CD8-positive, alpha-beta memory T cell (primary cell): ENCODE measurements at regions of chr2 and their contacts with region 1.

Region 1: GRCh38 chr2:100610381-100610831 is 47.6 kb downstream of the PDCL3 start:
- DNase-seq: peak; percentile 51 to 81 (median 59)
- H3K4me3 ChIP-seq: no peak overlapping the region
- H3K4me3 Mint-ChIP-seq: no peak overlapping the region
- H3K27ac ChIP-seq: no peak overlapping the region
- H3K27ac Mint-ChIP-seq: peak overlapping the region in 1 of 8 donors; percentile 27
- H3K4me1 ChIP-seq: peaks cover 4% of the 10 kb centered on the region
- H3K4me1 Mint-ChIP-seq: peaks cover 0 to 2% (median 0%) of the 10 kb centered on the region in 3 donors
- H3K27me3 ChIP-seq: no peaks in the 10 kb centered on the region
- H3K27me3 Mint-ChIP-seq: peaks cover 2 to 5% of the 10 kb centered on the region in 2 donors

Region 2: DNA sequence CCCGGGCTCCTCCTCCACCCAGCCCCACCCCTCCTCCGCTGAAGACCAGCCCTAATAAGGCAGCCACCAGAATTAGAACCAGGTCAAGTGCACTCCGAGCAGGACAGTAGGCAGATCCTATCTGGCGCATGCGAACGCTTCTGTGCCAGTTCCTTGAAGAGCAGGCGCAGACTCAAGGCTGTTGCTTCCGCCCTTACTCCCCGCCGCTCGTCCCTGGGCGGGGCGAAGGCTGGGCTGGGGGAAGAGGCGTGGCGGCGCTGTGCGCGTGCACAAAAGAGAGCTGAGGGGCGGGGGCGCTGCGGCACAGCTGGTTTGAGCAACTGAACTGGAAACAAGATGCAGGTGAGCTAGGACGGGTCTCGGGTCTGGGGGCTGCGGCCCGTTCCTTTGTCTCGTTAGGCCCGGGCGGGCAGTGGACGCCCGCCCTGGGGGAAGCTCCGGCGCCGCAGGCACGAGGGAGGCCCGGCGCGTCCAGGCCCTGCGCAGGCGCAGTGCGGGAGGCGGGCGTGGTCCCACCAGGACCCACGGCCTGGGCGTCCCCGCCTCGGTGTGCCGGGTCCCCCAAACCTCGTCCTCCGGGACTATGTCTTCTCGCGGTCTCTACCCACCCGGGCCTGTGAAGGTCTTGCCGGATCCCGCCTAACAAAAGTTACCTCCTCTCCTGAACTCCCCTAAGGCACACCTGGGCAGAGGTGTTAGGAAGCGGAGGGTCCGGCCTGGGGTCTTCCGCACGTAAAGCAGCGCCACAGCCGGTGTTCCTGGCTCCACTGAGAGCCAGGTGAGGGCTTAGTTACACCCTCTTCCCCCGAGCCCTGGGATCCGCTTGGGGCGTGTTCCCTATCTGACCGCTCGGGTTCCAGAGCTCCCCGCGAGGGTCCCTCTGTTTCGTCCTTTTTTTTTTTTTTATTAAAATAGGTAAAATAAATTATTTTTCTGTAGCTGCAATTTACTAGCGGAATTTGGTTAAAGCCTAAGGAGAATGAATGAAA is 47.4 kb before region 1 on chr2 and contains the start of gene PDCL3:
- CTCF ChIA-PET with region 1: interaction called, 12 read pairs
- POLR2A ChIA-PET with region 1: interaction called, 3 read pairs
- DNase-seq: peak; percentile 91 to 98 (median 97)
- H3K4me3 ChIP-seq: peak within 1 kb of the TSS; percentile 93
- H3K4me3 Mint-ChIP-seq: peak within 1 kb of the TSS; percentile 89 to 97 (median 94)
- H3K27ac ChIP-seq: peak within 1 kb of the TSS; percentile 85
- H3K27ac Mint-ChIP-seq: peak within 1 kb of the TSS; percentile 96 to 99 (median 98)
- H3K4me1 ChIP-seq: peaks cover 22% of the 10 kb centered on the region
- H3K4me1 Mint-ChIP-seq: peaks cover 26 to 57% (median 49%) of the 10 kb centered on the region in 3 donors
- H3K27me3 ChIP-seq: no peaks in the 10 kb centered on the region
- H3K27me3 Mint-ChIP-seq: no peaks in the 10 kb centered on the region
- total RNA-seq, gene PDCL3: 46.5 to 54.1 TPM

Region 3: GRCh38 chr2:100580367-100581276 is 29.8 kb before region 1 on chr2:
- CTCF ChIA-PET with region 1: interaction called, 10 read pairs
- POLR2A ChIA-PET with region 1: no interaction called
- DNase-seq: peak; percentile 35 to 85 (median 72)
- H3K4me3 ChIP-seq: peak overlapping the region; percentile 49
- H3K4me3 Mint-ChIP-seq: peak overlapping the region; percentile 8 to 79 (median 64)
- H3K27ac ChIP-seq: peak overlapping the region; percentile 73
- H3K27ac Mint-ChIP-seq: peak overlapping the region; percentile 88 to 100 (median 96)
- H3K4me1 ChIP-seq: peaks cover 34% of the 10 kb centered on the region
- H3K4me1 Mint-ChIP-seq: peaks cover 32 to 52% (median 36%) of the 10 kb centered on the region in 3 donors
- H3K27me3 ChIP-seq: no peaks in the 10 kb centered on the region
- H3K27me3 Mint-ChIP-seq: no peaks in the 10 kb centered on the region

Region 4: DNA sequence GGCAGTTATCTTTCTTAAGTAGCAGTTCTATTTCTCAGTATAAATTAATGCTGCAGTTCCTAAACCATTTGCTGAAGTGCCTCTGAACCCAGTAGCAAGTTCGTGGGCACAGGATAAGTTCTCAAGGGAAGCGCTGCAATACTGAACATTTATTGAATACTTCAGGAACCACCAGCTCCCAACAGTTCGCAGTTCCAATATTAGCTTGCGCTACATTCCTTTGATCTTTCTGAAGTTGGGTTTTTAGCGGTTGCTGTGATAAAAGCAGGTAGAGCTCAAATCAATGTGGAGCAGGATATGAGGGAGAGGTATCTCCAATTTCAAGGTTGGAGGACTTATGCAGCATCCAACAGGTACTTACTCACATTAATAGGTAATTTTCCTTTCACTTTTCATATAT is 13.9 kb before region 1 on chr2:
- CTCF ChIA-PET with region 1: interaction called, 35 read pairs
- POLR2A ChIA-PET with region 1: no interaction called
- DNase-seq: no peak
- H3K4me3 ChIP-seq: no peak overlapping the region
- H3K4me3 Mint-ChIP-seq: no peak overlapping the region
- H3K27ac ChIP-seq: no peak overlapping the region
- H3K27ac Mint-ChIP-seq: no peak overlapping the region
- H3K4me1 ChIP-seq: no peaks in the 10 kb centered on the region
- H3K4me1 Mint-ChIP-seq: peaks cover 15 to 29% (median 21%) of the 10 kb centered on the region in 3 donors
- H3K27me3 ChIP-seq: no peaks in the 10 kb centered on the region
- H3K27me3 Mint-ChIP-seq: no peaks in the 10 kb centered on the region

Region 5: DNA sequence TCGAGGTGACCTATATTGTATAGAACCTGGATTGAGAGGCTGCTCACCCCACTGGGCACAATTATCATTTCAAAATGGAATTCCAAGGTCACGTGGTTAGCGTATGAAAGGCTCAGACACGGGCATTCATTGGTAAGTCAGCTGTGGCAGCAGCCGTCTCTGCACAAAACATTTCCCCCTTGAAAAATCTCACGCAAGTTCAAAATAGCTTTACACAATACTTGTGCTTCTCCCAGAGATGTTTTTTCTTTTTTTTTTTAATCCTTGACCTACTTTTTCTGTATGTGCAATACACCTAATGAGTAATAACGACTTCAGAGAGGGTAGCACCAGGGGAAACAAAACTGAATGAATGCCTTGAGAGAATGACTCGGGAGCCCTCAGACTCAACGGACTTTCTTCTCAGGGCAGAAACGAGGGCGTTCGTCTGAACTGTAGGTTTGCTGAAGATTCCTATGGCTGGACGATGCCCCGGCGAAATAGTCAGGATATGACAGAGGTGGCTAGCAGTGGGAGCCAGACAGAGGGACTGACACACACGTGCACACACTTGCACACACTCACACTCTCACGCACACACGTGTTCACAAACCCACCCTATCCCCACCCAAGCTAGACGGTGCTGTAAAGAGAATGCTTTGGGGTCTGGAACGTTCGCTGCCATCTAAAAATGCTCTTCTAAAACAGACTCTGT is 30.2 kb after region 1 on chr2:
- CTCF ChIA-PET with region 1: interaction called, 24 read pairs
- POLR2A ChIA-PET with region 1: no interaction called
- DNase-seq: no peak
- H3K4me3 ChIP-seq: no peak overlapping the region
- H3K4me3 Mint-ChIP-seq: peak overlapping the region in 5 of 7 donors; percentile 6 to 60 (median 38)
- H3K27ac ChIP-seq: no peak overlapping the region
- H3K27ac Mint-ChIP-seq: peak overlapping the region in 4 of 8 donors; percentile 13 to 90 (median 52)
- H3K4me1 ChIP-seq: peaks cover 34% of the 10 kb centered on the region
- H3K4me1 Mint-ChIP-seq: peaks cover 38 to 53% (median 53%) of the 10 kb centered on the region in 3 donors
- H3K27me3 ChIP-seq: no peaks in the 10 kb centered on the region
- H3K27me3 Mint-ChIP-seq: peaks cover 0 to 10% of the 10 kb centered on the region in 2 donors

Region 6: GRCh38 chr2:100984892-100985379 is 374.5 kb after region 1 on chr2:
- CTCF ChIA-PET with region 1: interaction called, 106 read pairs
- POLR2A ChIA-PET with region 1: no interaction called
- DNase-seq: peak; percentile 57 to 84 (median 67)
- H3K4me3 ChIP-seq: no peak overlapping the region
- H3K4me3 Mint-ChIP-seq: peak overlapping the region in 1 of 7 donors; percentile 34
- H3K27ac ChIP-seq: no peak overlapping the region
- H3K27ac Mint-ChIP-seq: peak overlapping the region in 2 of 8 donors; percentile 5 to 35
- H3K4me1 ChIP-seq: no peaks in the 10 kb centered on the region
- H3K4me1 Mint-ChIP-seq: peaks cover 0 to 3% (median 2%) of the 10 kb centered on the region in 3 donors
- H3K27me3 ChIP-seq: no peaks in the 10 kb centered on the region
- H3K27me3 Mint-ChIP-seq: no peaks in the 10 kb centered on the region